Activated CD4-positive, alpha-beta memory T cell treated with anti-CD3 and anti-CD28 coated beads, Interleukin-2, amount 10 ng/mL, durations not matched to agents 7 days and 5 days (primary cell): ENCODE measurements at regions of chr3 and their contacts with region 1.

Region 1: GRCh38 chr3:52220380-52221026 is 4.9 kb downstream of the TLR9 start:
- DNase-seq: peak; percentile 91
- H3K4me3 Mint-ChIP-seq: peak overlapping the region; percentile 50
- H3K27ac Mint-ChIP-seq: peak overlapping the region; percentile 79
- H3K4me1 Mint-ChIP-seq: peaks cover 91% of the 10 kb centered on the region
- H3K27me3 Mint-ChIP-seq: no peaks in the 10 kb centered on the region

Region 2: GRCh38 chr3:52154117-52155094 is 66.1 kb before region 1 on chr3 and contains the start of gene POC1A:
- CTCF ChIA-PET with region 1: interaction called, 7 read pairs
- POLR2A ChIA-PET with region 1: interaction called, 12 read pairs
- DNase-seq: peak; percentile 91
- H3K4me3 Mint-ChIP-seq: peak within 1 kb of the TSS; percentile 85
- H3K27ac Mint-ChIP-seq: peak within 1 kb of the TSS; percentile 89
- H3K4me1 Mint-ChIP-seq: peaks cover 29% of the 10 kb centered on the region
- H3K27me3 Mint-ChIP-seq: peaks cover 2% of the 10 kb centered on the region
- total RNA-seq, gene POC1A: 24.8 to 25.6 TPM

Region 3: GRCh38 chr3:52231502-52232293 is 11.2 kb after region 1 on chr3:
- CTCF ChIA-PET with region 1: interaction called, 45 read pairs
- POLR2A ChIA-PET with region 1: interaction called, 121 read pairs
- DNase-seq: peak; percentile 87
- H3K4me3 Mint-ChIP-seq: no peak overlapping the region
- H3K27ac Mint-ChIP-seq: peak overlapping the region; percentile 63
- H3K4me1 Mint-ChIP-seq: peaks cover 45% of the 10 kb centered on the region
- H3K27me3 Mint-ChIP-seq: no peaks in the 10 kb centered on the region

Region 4: GRCh38 chr3:52245322-52246263 is 25.1 kb after region 1 on chr3 and contains the start of gene PPM1M:
- CTCF ChIA-PET with region 1: interaction called, 18 read pairs
- POLR2A ChIA-PET with region 1: interaction called, 121 read pairs
- DNase-seq: peak; percentile 69
- H3K4me3 Mint-ChIP-seq: peak within 1 kb of the TSS; percentile 89
- H3K27ac Mint-ChIP-seq: peak within 1 kb of the TSS; percentile 91
- H3K4me1 Mint-ChIP-seq: peaks cover 76% of the 10 kb centered on the region
- H3K27me3 Mint-ChIP-seq: no peaks in the 10 kb centered on the region
- total RNA-seq, gene PPM1M: 123 to 124 TPM

Region 5: DNA sequence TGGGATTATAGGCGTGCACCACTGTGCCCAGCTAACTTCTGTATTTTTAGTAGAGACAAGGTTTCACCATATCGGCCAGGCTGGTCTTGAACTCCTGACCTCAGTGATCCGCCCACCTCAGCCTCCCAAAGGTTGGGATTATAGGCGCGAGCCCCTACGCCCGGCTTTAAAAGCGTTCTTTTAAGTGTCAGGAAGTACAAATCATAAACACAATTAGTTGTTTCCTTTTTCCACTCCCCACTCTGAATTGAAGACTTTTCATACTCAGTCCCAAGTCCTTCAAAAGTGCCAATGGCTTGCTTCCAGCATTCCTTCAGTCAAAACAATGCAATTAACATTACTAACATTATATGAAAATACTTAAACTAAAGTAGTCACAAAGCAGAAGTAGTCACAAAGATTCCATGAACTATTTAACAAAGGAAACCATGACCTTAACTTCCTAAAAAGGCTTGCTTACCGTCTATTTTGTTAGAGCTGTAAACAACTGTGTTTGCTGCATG is 49.8 kb after region 1 on chr3:
- CTCF ChIA-PET with region 1: interaction called, 20 read pairs
- POLR2A ChIA-PET with region 1: interaction called, 3 read pairs
- DNase-seq: no peak
- H3K4me3 Mint-ChIP-seq: peak overlapping the region; percentile 72
- H3K27ac Mint-ChIP-seq: peak overlapping the region; percentile 91
- H3K4me1 Mint-ChIP-seq: peaks cover 87% of the 10 kb centered on the region
- H3K27me3 Mint-ChIP-seq: no peaks in the 10 kb centered on the region

Region 6: GRCh38 chr3:52339612-52340011 is 119.1 kb after region 1 on chr3:
- CTCF ChIA-PET with region 1: interaction called, 138 read pairs
- POLR2A ChIA-PET with region 1: interaction called, 6 read pairs
- DNase-seq: peak; percentile 49
- H3K4me3 Mint-ChIP-seq: no peak overlapping the region
- H3K27ac Mint-ChIP-seq: no peak overlapping the region
- H3K4me1 Mint-ChIP-seq: peaks cover 8% of the 10 kb centered on the region
- H3K27me3 Mint-ChIP-seq: no peaks in the 10 kb centered on the region